ENCODE measurements at regions of chr14 and their contacts with region 1.

Region 1: DNA sequence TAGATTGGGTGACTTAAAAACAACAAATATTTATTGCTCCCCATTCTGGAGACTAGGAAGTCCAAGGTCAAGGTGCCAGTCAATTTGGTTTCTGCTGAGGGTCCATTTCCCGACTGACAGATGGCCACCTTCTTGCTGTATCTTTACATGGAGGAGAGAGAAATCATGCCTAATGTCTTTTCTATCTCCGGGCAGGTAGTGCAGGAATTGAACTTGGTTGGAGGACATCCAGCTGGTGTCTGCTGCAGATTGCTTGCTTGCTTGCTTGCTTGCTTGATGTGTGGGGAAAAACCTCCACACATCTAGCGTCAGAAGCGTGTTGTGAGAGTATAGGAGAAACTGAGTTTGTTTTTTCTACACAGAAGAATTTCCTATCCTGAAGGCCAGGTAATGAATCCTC is 561.4 kb downstream of the DIO2 start:
- DNase-seq: no peak
- H3K4me3 Mint-ChIP-seq: no peak overlapping the region
- H3K27ac Mint-ChIP-seq: no peak overlapping the region
- H3K4me1 Mint-ChIP-seq: no peaks in the 10 kb centered on the region
- H3K27me3 Mint-ChIP-seq: no peaks in the 10 kb centered on the region

Region 2: GRCh38 chr14:79638672-79639266 is 11.1 kb before region 1 on chr14:
- intact Hi-C with region 1: loop called (anchors 1 kb)
- DNase-seq: no peak
- H3K4me3 Mint-ChIP-seq: no peak overlapping the region
- H3K27ac Mint-ChIP-seq: no peak overlapping the region
- H3K4me1 Mint-ChIP-seq: no peaks in the 10 kb centered on the region
- H3K27me3 Mint-ChIP-seq: no peaks in the 10 kb centered on the region

Region 3: GRCh38 chr14:79825046-79825521 is 175.2 kb after region 1 on chr14:
- intact Hi-C with region 1: no loop called
- DNase-seq: no peak
- H3K4me3 Mint-ChIP-seq: no peak overlapping the region
- H3K27ac Mint-ChIP-seq: no peak overlapping the region
- H3K4me1 Mint-ChIP-seq: no peaks in the 10 kb centered on the region
- H3K27me3 Mint-ChIP-seq: no peaks in the 10 kb centered on the region

Measured in activated T-helper 2 cell treated with anti-CD3 and anti-CD28 coated beads, Interferon-gamma antibody, Interleukin-2, Interleukin-4, amounts not matched to agents 10 μg/mL and 5 μg/mL and 100 μg/mL, durations not matched to agents 14 hours and 24 hours and 36 hours (primary cell).